ENCODE measurements at regions of chr4 and their contacts with region 1.

Region 1: GRCh38 chr4:158624889-158625478 is 46.7 kb downstream of the C4orf46 start:
- DNase-seq: no peak
- ATAC-seq: peak; percentile 58
- H3K4me3 Mint-ChIP-seq: no peak overlapping the region
- H3K27ac Mint-ChIP-seq: no peak overlapping the region
- H3K4me1 Mint-ChIP-seq: no peaks in the 10 kb centered on the region
- H3K27me3 Mint-ChIP-seq: no peaks in the 10 kb centered on the region
- CTCF ChIP-seq: peak; percentile 59

Region 2: DNA sequence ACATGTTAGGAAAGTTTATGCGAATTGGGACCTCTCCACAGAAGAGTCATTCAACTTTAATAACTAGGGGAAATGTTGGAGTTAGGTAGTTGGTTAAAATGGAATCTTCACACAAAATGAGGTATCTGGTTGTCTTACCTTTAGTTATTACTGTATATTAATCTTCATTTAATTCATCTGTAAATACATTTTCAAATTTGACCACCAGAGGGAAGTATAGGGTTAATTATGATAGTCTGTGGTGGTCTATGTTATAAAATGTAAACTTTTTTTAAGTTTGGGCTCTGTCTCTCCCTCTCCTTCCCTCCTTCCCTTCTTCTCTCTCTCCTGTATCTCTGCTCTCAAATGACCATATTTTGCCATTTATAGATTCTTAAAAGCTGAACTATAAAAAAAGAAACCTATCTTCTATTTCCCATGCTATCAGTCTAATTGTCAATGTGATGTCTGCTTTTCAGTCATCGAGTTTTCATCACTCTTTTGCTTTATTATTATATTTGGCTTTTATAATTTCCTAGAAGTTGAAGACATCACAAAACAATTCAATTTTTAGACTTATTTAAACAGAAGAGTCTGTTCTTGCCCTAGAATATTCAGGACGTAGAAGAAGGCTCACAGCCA is 364.9 kb before region 1 on chr4:
- CTCF ChIA-PET with region 1: interaction called, 4 read pairs
- POLR2A ChIA-PET with region 1: no interaction called
- intact Hi-C with region 1: loop called (anchors 2 kb)
- DNase-seq: no peak
- ATAC-seq: no peak
- H3K4me3 Mint-ChIP-seq: no peak overlapping the region
- H3K27ac Mint-ChIP-seq: no peak overlapping the region
- H3K4me1 Mint-ChIP-seq: no peaks in the 10 kb centered on the region
- H3K27me3 Mint-ChIP-seq: peaks cover 3% of the 10 kb centered on the region
- CTCF ChIP-seq: peak; percentile 44

Region 3: DNA sequence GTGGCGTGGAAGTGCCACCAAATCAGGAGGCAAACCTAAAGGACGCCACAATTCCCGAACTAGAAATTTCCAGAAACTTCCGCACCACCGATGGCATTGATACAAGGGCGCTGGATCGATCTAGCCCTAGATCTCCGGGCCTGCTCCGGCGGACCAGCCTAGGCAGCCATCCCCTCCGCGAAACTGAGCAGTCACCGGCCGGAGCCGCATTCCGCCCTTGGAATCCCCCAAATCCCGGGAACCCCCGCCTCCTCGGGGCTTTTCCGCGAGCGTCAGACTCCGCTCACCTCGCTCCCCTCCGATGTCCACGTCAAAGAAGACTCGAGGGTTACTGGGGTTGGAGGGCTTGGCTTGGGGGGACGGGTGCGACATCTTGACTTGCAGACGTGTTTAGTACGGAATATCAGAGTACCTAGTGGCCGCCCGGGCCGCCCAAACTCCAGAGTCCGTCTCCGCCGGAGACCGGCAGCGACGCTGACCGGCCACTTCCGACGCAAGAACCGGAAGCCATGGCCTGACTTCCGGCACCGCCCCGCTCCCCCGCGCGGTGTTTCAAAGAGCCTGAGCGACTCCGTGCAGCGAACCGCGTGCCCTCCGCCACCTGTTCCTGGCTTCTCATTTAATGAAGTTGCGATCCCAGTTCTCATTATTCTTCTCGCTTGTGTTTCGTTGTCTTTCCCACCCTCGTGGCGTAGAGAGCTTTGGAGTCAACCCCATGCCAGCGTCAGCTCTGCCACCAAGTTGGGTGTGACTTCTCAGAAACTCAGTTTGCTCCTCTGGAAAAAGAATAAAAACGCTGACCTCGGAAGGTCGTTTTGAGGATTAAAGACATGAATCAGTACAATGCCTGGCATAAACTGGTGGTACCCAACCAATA is 98.2 kb after region 1 on chr4 and contains the start of gene PPID:
- CTCF ChIA-PET with region 1: no interaction called
- POLR2A ChIA-PET with region 1: no interaction called
- intact Hi-C with region 1: no loop called
- DNase-seq: peak; percentile 90
- ATAC-seq: peak; percentile 92
- H3K4me3 Mint-ChIP-seq: peak within 1 kb of the TSS; percentile 93
- H3K27ac Mint-ChIP-seq: peak within 1 kb of the TSS; percentile 98
- H3K4me1 Mint-ChIP-seq: peaks cover 54% of the 10 kb centered on the region
- H3K27me3 Mint-ChIP-seq: peaks cover 7% of the 10 kb centered on the region
- CTCF ChIP-seq: no peak
- total RNA-seq, gene PPID: 66.5 to 69.3 TPM